GM12878 (cell line): ENCODE measurements at regions of chr9 and their contacts with region 1.

Region 1: DNA sequence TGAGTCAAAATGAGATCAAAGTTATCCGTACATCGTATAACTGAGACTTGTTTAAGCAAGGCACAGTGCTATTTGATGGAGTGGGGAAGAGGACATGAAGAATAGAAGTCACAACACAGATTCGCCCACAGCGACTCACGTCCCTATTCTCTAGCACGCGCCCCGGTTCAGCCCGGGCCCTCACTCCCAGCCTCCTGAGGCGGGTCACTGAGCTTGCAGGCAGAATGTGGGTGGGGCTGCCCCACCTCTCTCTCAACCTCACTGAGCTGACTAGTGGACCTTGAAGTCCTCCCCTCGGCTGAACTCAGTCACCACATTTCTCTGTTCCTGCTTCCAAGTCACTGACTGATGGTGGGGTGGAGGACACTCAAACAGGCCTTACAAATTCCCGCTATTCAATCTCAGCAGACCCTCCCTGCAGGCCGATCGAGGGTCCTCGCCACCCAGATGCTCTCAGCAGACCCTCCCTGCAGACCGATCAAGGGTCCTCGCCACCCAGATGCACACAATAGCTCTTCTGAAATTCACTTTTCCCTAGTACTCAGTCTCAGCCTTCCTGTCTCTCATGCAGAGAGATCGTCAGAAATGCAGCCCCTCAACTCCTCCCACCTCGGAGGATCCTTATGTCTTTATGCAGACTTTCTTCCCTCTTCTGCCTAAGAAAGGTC is 12.9 kb downstream of the GLDC start:
- DNase-seq: peak; percentile 87
- ATAC-seq: peak; percentile 96
- H3K4me3 ChIP-seq: peak overlapping the region; percentile 38; the same call in 1 of the 2 replicates
- H3K27ac ChIP-seq: peak overlapping the region; percentile 59
- H3K4me1 ChIP-seq: peaks cover 32% of the 10 kb centered on the region
- H3K27me3 ChIP-seq: no peaks in the 10 kb centered on the region
- CTCF ChIP-seq: no peak
- EP300 ChIP-seq: peak in 1 of 2 experiments; percentile 66; a peak in 2 of 4 replicates
- POLR2A ChIP-seq: peak; percentile 50
- RAD21 ChIP-seq: no peak

Region 2: DNA sequence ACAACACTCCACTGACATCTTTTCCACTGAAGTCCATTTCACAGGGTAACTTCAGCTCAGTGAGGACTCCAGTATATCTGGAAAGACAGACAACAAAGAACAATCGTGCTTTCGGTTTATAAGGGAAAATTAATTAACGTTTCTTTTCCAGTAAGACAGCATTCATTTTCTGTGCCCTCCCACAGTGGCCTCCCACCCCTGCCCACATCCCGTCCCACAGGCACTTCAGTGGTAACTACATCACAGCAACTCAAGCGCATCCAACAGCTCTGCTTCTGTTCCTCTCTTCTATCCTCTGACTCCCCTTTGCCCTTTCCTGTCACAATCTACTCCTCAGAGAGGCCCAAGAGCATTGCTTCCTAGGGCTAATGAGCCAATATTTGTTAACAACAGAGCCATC is 27.4 kb before region 1 on chr9:
- CTCF ChIA-PET with region 1: interaction called, 3 read pairs
- POLR2A ChIA-PET with region 1: interaction called, 4 read pairs
- RAD21 ChIA-PET with region 1: interaction called, 5 read pairs
- SMC1A ChIA-PET with region 1: interaction called, 12 read pairs
- in situ Hi-C with region 1: no loop called
- intact Hi-C with region 1: no loop called
- DNase-seq: peak; percentile 71
- ATAC-seq: peak; percentile 99
- H3K4me3 ChIP-seq: peak overlapping the region; percentile 24; the same call in 1 of the 2 replicates
- H3K27ac ChIP-seq: peak overlapping the region; percentile 64
- H3K4me1 ChIP-seq: peaks cover 14% of the 10 kb centered on the region
- H3K27me3 ChIP-seq: no peaks in the 10 kb centered on the region
- CTCF ChIP-seq: no peak
- EP300 ChIP-seq: peak; percentile 13 to 49; a peak in 1 of 4 replicates
- POLR2A ChIP-seq: no peak
- RAD21 ChIP-seq: no peak

Region 3: GRCh38 chr9:6645355-6646292 is 13.0 kb after region 1 on chr9 and contains the start of gene GLDC:
- CTCF ChIA-PET with region 1: interaction called, 19 read pairs
- POLR2A ChIA-PET with region 1: interaction called, 18 read pairs
- RAD21 ChIA-PET with region 1: interaction called, 59 read pairs
- SMC1A ChIA-PET with region 1: interaction called, 37 read pairs
- in situ Hi-C with region 1: no loop called
- intact Hi-C with region 1: no loop called
- DNase-seq: no peak
- ATAC-seq: peak; percentile 91
- H3K4me3 ChIP-seq: peak within 1 kb of the TSS; percentile 94
- H3K27ac ChIP-seq: peak within 1 kb of the TSS; percentile 75
- H3K4me1 ChIP-seq: no peaks in the 10 kb centered on the region; the same call in 1 of the 2 replicates
- H3K27me3 ChIP-seq: no peaks in the 10 kb centered on the region
- CTCF ChIP-seq: no peak
- EP300 ChIP-seq: no peak
- POLR2A ChIP-seq: peak; percentile 80
- RAD21 ChIP-seq: no peak
- polyA plus RNA-seq, gene GLDC: 88.2 to 112 TPM

Region 4: DNA sequence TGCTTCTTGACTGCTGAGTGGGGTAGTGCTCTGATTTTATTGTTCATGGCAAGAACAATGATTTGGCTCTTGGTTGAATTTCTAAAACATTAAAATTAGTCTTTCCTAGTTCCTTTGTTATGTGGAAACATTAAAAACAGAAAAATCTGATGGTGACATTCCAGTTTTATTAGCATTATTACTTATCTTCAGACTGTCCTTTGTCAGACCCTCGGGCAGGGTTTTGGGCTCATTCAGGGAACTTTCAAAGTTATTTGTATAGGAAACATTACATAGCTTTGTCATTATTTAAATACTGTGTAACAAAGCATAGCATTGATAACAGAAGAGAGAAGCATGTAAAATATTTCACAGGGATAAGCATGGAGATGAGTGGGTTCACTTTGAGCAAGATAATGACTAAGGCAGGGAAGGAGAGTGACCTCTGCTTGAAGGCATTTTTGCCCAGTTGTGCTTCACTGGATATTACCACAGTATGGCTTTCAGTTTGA is 245.1 kb after region 1 on chr9:
- CTCF ChIA-PET with region 1: no interaction called
- POLR2A ChIA-PET with region 1: no interaction called
- RAD21 ChIA-PET with region 1: no interaction called
- SMC1A ChIA-PET with region 1: no interaction called
- in situ Hi-C with region 1: no loop called
- intact Hi-C with region 1: no loop called
- DNase-seq: no peak
- ATAC-seq: no peak
- H3K4me3 ChIP-seq: no peak overlapping the region
- H3K27ac ChIP-seq: no peak overlapping the region
- H3K4me1 ChIP-seq: no peaks in the 10 kb centered on the region
- H3K27me3 ChIP-seq: no peaks in the 10 kb centered on the region
- CTCF ChIP-seq: no peak
- EP300 ChIP-seq: no peak
- POLR2A ChIP-seq: no peak
- RAD21 ChIP-seq: no peak